ENCODE measurements at regions of chr6 and their contacts with region 1.

Region 1: GRCh38 chr6:35731736-35732532 is 4.9 kb upstream of the ARMC12 start:
- DNase-seq: peak; percentile 45
- H3K4me3 ChIP-seq: peak overlapping the region; percentile 73
- H3K27ac ChIP-seq: peak overlapping the region; percentile 91
- H3K27me3 ChIP-seq: no peaks in the 10 kb centered on the region
- CTCF ChIP-seq: no peak

Region 2: DNA sequence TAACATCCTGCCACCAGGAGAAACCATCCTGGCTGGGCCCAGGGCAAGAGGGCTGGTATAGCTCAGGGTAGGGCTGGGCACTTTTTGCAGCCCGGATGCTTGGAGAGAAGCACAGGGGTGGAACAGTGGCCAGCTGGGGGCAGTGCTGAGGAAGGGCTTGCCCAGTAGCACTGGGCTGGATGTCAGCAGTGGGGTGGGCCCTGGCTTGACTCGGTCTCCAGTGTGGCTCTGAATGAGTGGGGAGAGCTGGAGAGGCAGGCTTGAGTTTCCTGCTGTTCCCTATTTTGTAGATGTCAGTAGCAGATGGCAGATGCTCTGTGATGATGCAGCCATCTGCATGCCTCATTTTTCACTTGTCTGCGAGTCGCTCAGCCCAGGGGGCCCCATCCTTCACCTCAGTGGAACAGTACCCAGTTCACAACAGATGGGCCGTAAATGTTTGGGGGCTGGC is 162.9 kb before region 1 on chr6:
- CTCF ChIA-PET with region 1: interaction called, 20 read pairs
- POLR2A ChIA-PET with region 1: no interaction called
- DNase-seq: no peak
- H3K4me3 ChIP-seq: no peak overlapping the region
- H3K27ac ChIP-seq: no peak overlapping the region
- H3K27me3 ChIP-seq: peaks cover 18% of the 10 kb centered on the region
- CTCF ChIP-seq: peak; percentile 26; the same call in 1 of the 2 replicates

Region 3: DNA sequence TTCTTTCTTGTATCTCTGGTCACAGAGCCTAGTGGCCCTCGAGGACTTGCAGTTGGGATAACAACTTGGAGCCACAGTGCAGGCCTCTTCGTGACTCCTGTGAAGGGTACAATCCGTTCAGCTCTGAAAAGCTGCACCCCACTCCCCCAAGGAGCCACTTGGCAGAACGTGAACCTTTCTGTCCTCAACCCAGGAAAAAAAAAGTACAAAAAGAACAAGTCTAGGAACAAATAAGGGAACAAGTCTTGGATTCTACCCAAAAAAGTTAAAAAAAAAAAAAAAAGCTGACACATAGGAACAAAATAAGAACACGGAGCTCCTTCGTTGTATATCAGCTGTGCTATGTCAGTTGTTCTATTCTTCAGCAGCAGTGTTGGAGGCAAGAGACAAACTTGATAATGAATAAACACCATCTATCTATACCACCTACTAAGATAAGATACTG is 141.3 kb before region 1 on chr6:
- CTCF ChIA-PET with region 1: interaction called, 126 read pairs
- POLR2A ChIA-PET with region 1: interaction called, 3 read pairs
- DNase-seq: no peak
- H3K4me3 ChIP-seq: no peak overlapping the region
- H3K27ac ChIP-seq: no peak overlapping the region
- H3K27me3 ChIP-seq: no peaks in the 10 kb centered on the region
- CTCF ChIP-seq: no peak

Region 4: DNA sequence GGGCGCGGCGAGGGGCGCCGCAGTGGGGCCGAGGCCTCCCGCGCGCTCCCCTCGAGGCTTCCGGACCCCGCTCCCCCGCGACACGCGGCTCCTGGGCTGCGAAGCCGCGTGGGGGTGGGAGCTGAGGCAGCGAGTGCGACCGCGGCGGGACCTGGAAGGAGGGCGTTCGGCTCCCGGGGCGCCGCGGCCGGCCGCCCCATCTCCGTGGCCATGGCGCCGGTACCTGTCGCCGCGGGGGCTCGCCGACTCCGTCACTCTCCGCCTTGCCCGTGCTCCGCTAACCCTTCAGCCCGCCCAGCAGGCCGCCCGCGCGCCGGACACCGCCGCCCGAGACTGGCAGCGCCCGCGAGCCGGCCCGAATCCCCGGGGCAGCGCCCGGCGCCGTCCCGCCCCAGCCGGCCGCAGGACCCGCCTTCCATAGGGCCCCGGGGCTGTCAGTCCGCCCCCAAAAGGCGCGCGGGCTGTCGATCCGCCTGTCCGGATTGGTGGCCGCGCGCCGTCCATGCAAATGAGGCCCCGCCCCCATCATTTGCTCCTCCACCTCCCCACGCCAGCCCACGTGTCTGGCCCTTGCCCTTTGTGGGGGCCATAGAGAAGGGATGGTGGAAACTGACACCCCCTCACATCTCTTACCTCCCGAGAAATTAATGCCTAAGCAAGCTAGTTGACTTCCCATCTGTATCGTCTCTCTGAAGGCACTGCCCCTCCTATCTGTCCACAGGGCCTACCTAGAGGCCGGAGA is 43.2 kb before region 1 on chr6 and contains the start of gene FKBP5:
- CTCF ChIA-PET with region 1: interaction called, 26 read pairs
- POLR2A ChIA-PET with region 1: interaction called, 4 read pairs
- DNase-seq: peak; percentile 67
- H3K4me3 ChIP-seq: peak within 1 kb of the TSS; percentile 75
- H3K27ac ChIP-seq: no peak within 1 kb of the TSS
- H3K27me3 ChIP-seq: no peaks in the 10 kb centered on the region
- CTCF ChIP-seq: no peak
- polyA plus RNA-seq, gene FKBP5: 6.9 and 7.6 TPM in 2 replicates

Region 5: GRCh38 chr6:35833536-35833935 is 101.6 kb after region 1 on chr6:
- CTCF ChIA-PET with region 1: no interaction called
- POLR2A ChIA-PET with region 1: no interaction called
- DNase-seq: no peak
- H3K4me3 ChIP-seq: no peak overlapping the region
- H3K27ac ChIP-seq: no peak overlapping the region
- H3K27me3 ChIP-seq: no peaks in the 10 kb centered on the region
- CTCF ChIP-seq: no peak

Measured in AG04450 (cell line).